ENCODE measurements at regions of chr2 and their contacts with region 1.

Region 1: GRCh38 chr2:37168217-37168981 is 11.6 kb upstream of the EIF2AK2 start:
- DNase-seq: peak; percentile 52
- H3K4me3 Mint-ChIP-seq: no peak overlapping the region
- H3K27ac Mint-ChIP-seq: no peak overlapping the region
- H3K4me1 Mint-ChIP-seq: no peaks in the 10 kb centered on the region
- H3K27me3 Mint-ChIP-seq: no peaks in the 10 kb centered on the region

Region 2: GRCh38 chr2:37156857-37157714 is 11.3 kb before region 1 on chr2 and contains the start of gene EIF2AK2:
- CTCF ChIA-PET with region 1: interaction called, 21 read pairs
- intact Hi-C with region 1: no loop called
- DNase-seq: peak; percentile 80
- H3K4me3 Mint-ChIP-seq: peak within 1 kb of the TSS; percentile 86
- H3K27ac Mint-ChIP-seq: peak within 1 kb of the TSS; percentile 85
- H3K4me1 Mint-ChIP-seq: peaks cover 30% of the 10 kb centered on the region
- H3K27me3 Mint-ChIP-seq: no peaks in the 10 kb centered on the region
- total RNA-seq, gene EIF2AK2: 54.5 to 55.7 TPM

Region 3: GRCh38 chr2:37263839-37264238 is 95.4 kb after region 1 on chr2:
- CTCF ChIA-PET with region 1: interaction called, 6 read pairs
- intact Hi-C with region 1: loop called (anchors 2 kb)
- DNase-seq: no peak
- H3K4me3 Mint-ChIP-seq: no peak overlapping the region
- H3K27ac Mint-ChIP-seq: no peak overlapping the region
- H3K4me1 Mint-ChIP-seq: peaks cover 6% of the 10 kb centered on the region
- H3K27me3 Mint-ChIP-seq: no peaks in the 10 kb centered on the region

Region 4: GRCh38 chr2:37282746-37283145 is 114.3 kb after region 1 on chr2:
- CTCF ChIA-PET with region 1: interaction called, 4 read pairs
- intact Hi-C with region 1: loop called (anchors 1 kb)
- DNase-seq: no peak
- H3K4me3 Mint-ChIP-seq: no peak overlapping the region
- H3K27ac Mint-ChIP-seq: no peak overlapping the region
- H3K4me1 Mint-ChIP-seq: peaks cover 5% of the 10 kb centered on the region
- H3K27me3 Mint-ChIP-seq: no peaks in the 10 kb centered on the region

Region 5: GRCh38 chr2:37537316-37537715 is 368.9 kb after region 1 on chr2:
- CTCF ChIA-PET with region 1: no interaction called
- intact Hi-C with region 1: loop called (anchors 1 kb)
- DNase-seq: no peak
- H3K4me3 Mint-ChIP-seq: no peak overlapping the region
- H3K27ac Mint-ChIP-seq: no peak overlapping the region
- H3K4me1 Mint-ChIP-seq: no peaks in the 10 kb centered on the region
- H3K27me3 Mint-ChIP-seq: no peaks in the 10 kb centered on the region